Colonic mucosa (tissue), 4 donors: ENCODE measurements at regions of chrX and their contacts with region 1.

Region 1: DNA sequence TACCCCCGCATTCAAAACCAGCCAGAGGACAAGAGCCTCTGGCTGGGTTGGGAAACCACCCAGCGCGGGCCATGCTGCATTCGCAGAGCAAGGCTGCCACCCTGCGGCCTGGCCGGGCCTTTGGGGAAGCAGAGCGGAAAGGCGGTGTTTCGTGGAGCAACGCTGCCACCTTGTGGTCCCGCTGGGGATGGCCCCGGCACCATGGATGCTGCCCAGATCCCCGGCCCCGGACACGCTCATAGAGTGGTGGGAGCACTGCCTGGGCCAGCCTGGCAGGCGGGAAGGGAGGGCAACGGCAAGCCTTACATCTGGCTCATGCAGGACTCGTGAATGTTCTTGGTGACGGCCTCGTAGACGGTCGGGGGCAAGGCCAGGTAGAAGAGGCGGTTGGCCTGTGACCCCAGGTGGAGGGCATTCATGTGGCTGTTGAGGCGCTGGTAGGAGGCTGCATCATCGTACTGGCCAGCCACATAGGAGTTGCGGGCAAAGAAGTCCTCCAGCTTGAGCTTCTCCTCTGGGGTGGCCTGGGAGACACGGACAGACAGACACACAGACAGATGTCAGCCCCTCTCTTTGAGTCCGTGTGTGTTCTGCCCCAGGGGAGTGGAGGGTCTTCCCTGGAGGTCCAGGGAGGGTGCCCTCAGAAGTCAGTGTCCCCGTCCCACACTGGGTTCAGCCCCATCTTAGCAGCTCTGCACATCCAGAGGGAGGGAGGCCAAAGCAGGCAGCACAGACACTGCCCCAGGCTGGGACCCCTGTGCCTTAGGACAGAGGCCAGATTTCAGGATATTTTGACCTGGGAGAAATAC is 11.6 kb downstream of the G6PD start:
- DNase-seq: peak; percentile 91
- H3K4me3 ChIP-seq: no peak overlapping the region
- H3K27ac ChIP-seq: no peak overlapping the region
- H3K4me1 ChIP-seq: no peaks in the 10 kb centered on the region
- H3K27me3 ChIP-seq: no peaks in the 10 kb centered on the region
- CTCF ChIP-seq: peak; percentile 99

Region 2: DNA sequence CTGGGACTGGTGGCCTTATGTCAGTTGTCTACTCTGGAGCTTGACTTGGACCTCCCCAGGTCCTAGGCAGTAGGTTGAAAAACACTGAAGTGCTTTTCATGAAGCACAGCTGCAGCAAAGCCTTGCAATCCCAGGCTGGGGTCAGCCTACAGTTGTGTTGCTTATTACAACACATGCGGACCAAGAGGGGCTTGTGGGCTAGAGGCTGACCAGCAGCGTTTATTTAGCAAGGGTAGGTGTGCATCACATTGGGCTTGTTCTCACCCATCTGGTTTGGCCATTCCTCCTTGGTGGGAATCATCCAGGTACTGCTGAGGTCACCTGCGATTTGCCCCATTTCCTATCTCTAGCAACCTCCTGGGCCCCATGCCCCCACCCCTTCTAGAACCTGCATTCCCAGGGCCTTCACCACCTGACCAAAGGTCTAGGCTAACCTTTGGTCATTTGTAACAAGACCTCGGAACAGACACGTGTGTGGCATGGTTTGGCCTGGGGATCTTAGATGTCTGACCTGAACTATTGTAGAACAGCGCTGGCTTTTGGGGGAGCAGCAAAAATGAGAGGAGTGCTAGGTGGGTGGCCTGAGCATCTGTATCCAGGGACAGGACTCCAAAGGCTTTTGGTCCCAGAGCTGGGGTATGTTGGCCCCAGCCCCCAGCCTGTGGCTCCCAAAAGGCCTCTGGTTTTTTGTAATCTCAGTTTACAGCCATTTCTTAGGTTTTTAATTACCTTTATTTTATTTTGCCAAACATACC is 133.8 kb before region 1 on chrX:
- intact Hi-C with region 1: loop called (anchors 5 kb)
- DNase-seq: no peak
- H3K4me3 ChIP-seq: no peak overlapping the region
- H3K27ac ChIP-seq: no peak overlapping the region
- H3K4me1 ChIP-seq: no peaks in the 10 kb centered on the region
- H3K27me3 ChIP-seq: no peaks in the 10 kb centered on the region
- CTCF ChIP-seq: no peak

Region 3: GRCh38 chrX:154748712-154749343 is 213.8 kb after region 1 on chrX:
- intact Hi-C with region 1: no loop called
- DNase-seq: peak; percentile 36
- H3K4me3 ChIP-seq: no peak overlapping the region
- H3K27ac ChIP-seq: peak overlapping the region; percentile 7
- H3K4me1 ChIP-seq: no peaks in the 10 kb centered on the region
- H3K27me3 ChIP-seq: peaks cover 11% of the 10 kb centered on the region
- CTCF ChIP-seq: peak; percentile 78

Region 4: GRCh38 chrX:155242300-155242699 is 707.2 kb after region 1 on chrX:
- intact Hi-C with region 1: no loop called
- DNase-seq: no peak
- H3K4me3 ChIP-seq: no peak overlapping the region
- H3K27ac ChIP-seq: no peak overlapping the region
- H3K4me1 ChIP-seq: no peaks in the 10 kb centered on the region
- H3K27me3 ChIP-seq: no peaks in the 10 kb centered on the region
- CTCF ChIP-seq: no peak